PC-3 (cell line): ENCODE measurements at regions of chr11 and their contacts with region 1.

Region 1: GRCh38 chr11:43987384-43988039 is 45.1 kb downstream of the C11orf96 start:
- DNase-seq: peak; percentile 48
- ATAC-seq: peak; percentile 43
- H3K4me3 ChIP-seq: 0 out of 2 replicates have a peak overlapping the region, but pooled peaks have one; percentile 27
- H3K27ac ChIP-seq: no peak overlapping the region
- H3K4me1 ChIP-seq: peaks cover 21% of the 10 kb centered on the region
- H3K27me3 ChIP-seq: no peaks in the 10 kb centered on the region
- CTCF ChIP-seq: no peak

Region 2: GRCh38 chr11:43969543-43969942 is 18.0 kb before region 1 on chr11:
- CTCF ChIA-PET with region 1: no interaction called
- POLR2A ChIA-PET with region 1: interaction called, 13 read pairs
- intact Hi-C with region 1: no loop called
- DNase-seq: no peak
- ATAC-seq: no peak
- H3K4me3 ChIP-seq: no peak overlapping the region
- H3K27ac ChIP-seq: no peak overlapping the region
- H3K4me1 ChIP-seq: no peaks in the 10 kb centered on the region
- H3K27me3 ChIP-seq: no peaks in the 10 kb centered on the region
- CTCF ChIP-seq: no peak

Region 3: GRCh38 chr11:44016131-44016530 is 28.6 kb after region 1 on chr11:
- CTCF ChIA-PET with region 1: interaction called, 4 read pairs
- POLR2A ChIA-PET with region 1: no interaction called
- intact Hi-C with region 1: loop called (anchors 5 kb)
- DNase-seq: peak; percentile 11
- ATAC-seq: peak; percentile 47
- H3K4me3 ChIP-seq: no peak overlapping the region
- H3K27ac ChIP-seq: no peak overlapping the region
- H3K4me1 ChIP-seq: peaks cover 4% of the 10 kb centered on the region; the same call in 1 of the 2 replicates
- H3K27me3 ChIP-seq: no peaks in the 10 kb centered on the region; the same call in 1 of the 2 replicates
- CTCF ChIP-seq: no peak

Region 4: GRCh38 chr11:44036811-44037657 is 49.5 kb after region 1 on chr11:
- CTCF ChIA-PET with region 1: no interaction called
- POLR2A ChIA-PET with region 1: no interaction called
- intact Hi-C with region 1: loop called (anchors 2 kb)
- DNase-seq: peak; percentile 79
- ATAC-seq: peak; percentile 97
- H3K4me3 ChIP-seq: no peak overlapping the region
- H3K27ac ChIP-seq: no peak overlapping the region
- H3K4me1 ChIP-seq: no peaks in the 10 kb centered on the region
- H3K27me3 ChIP-seq: no peaks in the 10 kb centered on the region
- CTCF ChIP-seq: peak; percentile 84

Region 5: DNA sequence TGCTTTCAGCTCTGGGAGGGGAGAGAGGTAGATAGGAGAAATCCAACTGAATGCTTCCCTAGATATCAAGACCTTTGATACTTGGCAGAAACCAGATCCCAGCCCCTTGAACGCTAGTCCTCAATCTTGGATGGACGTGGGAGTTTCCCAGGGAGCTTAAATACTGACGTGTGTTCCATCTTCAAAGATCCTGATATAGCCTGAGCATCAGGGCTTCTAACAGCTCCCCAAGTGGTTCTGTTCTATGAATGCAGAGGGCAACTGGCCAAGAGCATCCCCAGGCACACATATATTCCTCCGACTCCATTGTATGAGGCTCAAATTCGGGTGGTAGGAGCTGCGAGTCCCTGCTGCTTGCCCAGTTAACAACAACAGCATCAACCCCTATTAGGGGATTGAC is 69.8 kb after region 1 on chr11:
- CTCF ChIA-PET with region 1: no interaction called
- POLR2A ChIA-PET with region 1: no interaction called
- intact Hi-C with region 1: no loop called
- DNase-seq: no peak
- ATAC-seq: no peak
- H3K4me3 ChIP-seq: no peak overlapping the region
- H3K27ac ChIP-seq: no peak overlapping the region
- H3K4me1 ChIP-seq: no peaks in the 10 kb centered on the region
- H3K27me3 ChIP-seq: no peaks in the 10 kb centered on the region
- CTCF ChIP-seq: no peak

Region 6: GRCh38 chr11:44143943-44144909 is 156.7 kb after region 1 on chr11:
- CTCF ChIA-PET with region 1: interaction called, 10 read pairs
- POLR2A ChIA-PET with region 1: no interaction called
- intact Hi-C with region 1: no loop called
- DNase-seq: peak; percentile 95
- ATAC-seq: peak; percentile 60
- H3K4me3 ChIP-seq: peak overlapping the region; percentile 45; the same call in 1 of the 2 replicates
- H3K27ac ChIP-seq: peak overlapping the region; percentile 87
- H3K4me1 ChIP-seq: peaks cover 54% of the 10 kb centered on the region
- H3K27me3 ChIP-seq: no peaks in the 10 kb centered on the region
- CTCF ChIP-seq: no peak

Region 7: GRCh38 chr11:44565211-44565952 is 577.9 kb after region 1 on chr11 and contains the start of gene CD82:
- CTCF ChIA-PET with region 1: no interaction called
- POLR2A ChIA-PET with region 1: no interaction called
- intact Hi-C with region 1: no loop called
- DNase-seq: peak; percentile 96
- ATAC-seq: peak; percentile 95
- H3K4me3 ChIP-seq: peak within 1 kb of the TSS; percentile 76
- H3K27ac ChIP-seq: peak within 1 kb of the TSS; percentile 52
- H3K4me1 ChIP-seq: peaks cover 21% of the 10 kb centered on the region
- H3K27me3 ChIP-seq: no peaks in the 10 kb centered on the region
- CTCF ChIP-seq: no peak
- total RNA-seq, gene CD82: 4.3 and 5.0 TPM in 2 replicates